ENCODE measurements at regions of chr12 and their contacts with region 1.

Region 1: DNA sequence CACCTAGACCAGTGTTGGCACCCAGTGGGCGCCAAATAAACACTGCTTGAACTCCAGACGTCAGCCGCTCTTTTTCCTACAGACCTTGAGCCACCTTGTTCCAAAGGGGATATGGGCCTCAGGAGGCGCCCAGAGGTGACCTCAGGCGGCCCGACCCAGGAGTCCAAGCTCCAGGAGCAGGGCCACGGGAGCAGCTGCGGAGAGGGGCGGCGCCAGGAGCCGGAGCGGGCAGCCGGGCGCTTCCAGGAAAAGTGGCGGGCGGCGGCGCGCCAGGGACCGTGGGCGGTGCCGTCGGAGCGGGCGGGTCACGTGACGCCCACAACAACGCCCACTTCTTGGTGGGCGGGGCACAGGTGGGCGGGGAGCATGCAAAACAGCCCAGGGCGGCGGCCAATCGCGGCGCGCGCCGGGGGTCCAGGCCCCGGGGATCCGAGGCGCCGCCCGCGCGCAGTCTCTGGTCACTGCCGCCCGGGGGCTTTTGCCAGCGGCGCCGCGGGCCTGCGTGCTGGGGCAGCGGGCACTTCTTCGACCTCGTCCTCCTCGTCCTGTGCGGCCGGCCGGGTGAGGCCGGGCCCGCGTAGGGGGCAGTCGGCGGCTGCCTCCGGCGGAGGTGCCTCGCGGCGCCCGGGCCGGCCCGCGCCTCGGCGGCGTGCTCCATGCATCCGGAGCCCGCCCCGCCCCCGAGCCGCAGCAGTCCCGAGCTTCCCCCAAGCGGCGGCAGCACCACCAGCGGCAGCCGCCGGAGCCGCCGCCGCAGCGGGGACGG is at the start of gene ORAI1:
- DNase-seq: peak; percentile 96
- ATAC-seq: peak; percentile 76
- H3K4me3 Mint-ChIP-seq: peak within 1 kb of the TSS; percentile 95
- H3K27ac Mint-ChIP-seq: peak within 1 kb of the TSS; percentile 94
- H3K4me1 Mint-ChIP-seq: peaks cover 42% of the 10 kb centered on the region
- H3K27me3 Mint-ChIP-seq: no peaks in the 10 kb centered on the region
- total RNA-seq, gene ORAI1: 67.4 to 69.6 TPM

Region 2: DNA sequence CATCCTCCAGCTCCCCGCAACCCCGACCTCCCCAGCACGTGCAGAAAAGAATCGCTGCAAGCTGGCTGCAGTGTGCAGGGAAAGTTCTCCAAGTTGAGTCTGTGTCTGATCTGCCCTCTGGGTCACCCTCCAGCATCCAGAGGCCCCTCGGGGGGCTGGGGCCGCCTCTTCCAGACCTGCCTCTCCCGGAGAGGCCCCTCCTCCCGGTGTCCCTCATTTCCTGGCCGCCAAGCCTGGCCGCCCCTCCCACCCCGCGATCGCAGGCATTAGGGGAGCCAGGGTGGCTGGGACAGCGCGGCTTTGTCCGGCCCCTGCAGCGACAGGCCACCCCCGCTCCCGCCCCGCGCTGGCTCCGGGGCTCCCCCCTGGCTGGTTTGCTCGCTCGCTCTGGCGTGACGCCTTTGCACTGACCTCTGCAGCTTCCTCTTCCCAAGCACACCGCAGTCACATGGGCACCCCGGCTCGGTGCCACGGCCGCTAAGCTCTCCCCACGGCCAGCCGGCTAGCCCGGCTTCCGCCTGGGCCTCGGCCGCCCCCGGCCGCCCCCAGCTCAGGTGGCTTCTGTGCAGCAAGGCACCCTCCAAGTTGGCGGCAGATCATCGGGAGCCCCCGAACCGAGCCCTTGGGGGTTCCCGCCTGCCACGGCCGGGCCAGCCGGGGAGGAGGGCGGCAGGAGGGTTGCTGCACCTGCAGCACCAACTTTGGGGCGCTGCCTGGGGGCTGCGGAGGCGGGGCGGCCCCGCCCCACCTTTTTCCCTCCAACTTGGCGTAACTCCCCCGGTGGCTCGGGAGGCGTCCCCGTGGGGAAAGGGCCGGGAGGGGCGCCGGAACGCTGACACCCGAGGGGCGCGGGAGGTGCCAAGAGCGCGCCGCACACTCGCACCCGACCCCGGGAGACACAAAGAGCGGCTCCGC is 89.1 kb before region 1 on chr12:
- CTCF ChIA-PET with region 1: interaction called, 6 read pairs
- POLR2A ChIA-PET with region 1: interaction called, 12 read pairs
- DNase-seq: peak; percentile 66
- ATAC-seq: peak; percentile 63
- H3K4me3 Mint-ChIP-seq: peak overlapping the region; percentile 74
- H3K27ac Mint-ChIP-seq: peak overlapping the region; percentile 85
- H3K4me1 Mint-ChIP-seq: peaks cover 55% of the 10 kb centered on the region
- H3K27me3 Mint-ChIP-seq: no peaks in the 10 kb centered on the region

Region 3: GRCh38 chr12:121579981-121580868 is 46.0 kb before region 1 on chr12:
- CTCF ChIA-PET with region 1: interaction called, 57 read pairs
- POLR2A ChIA-PET with region 1: interaction called, 32 read pairs
- DNase-seq: peak; percentile 84
- ATAC-seq: peak; percentile 76
- H3K4me3 Mint-ChIP-seq: peak overlapping the region; percentile 98
- H3K27ac Mint-ChIP-seq: peak overlapping the region; percentile 98
- H3K4me1 Mint-ChIP-seq: peaks cover 36% of the 10 kb centered on the region
- H3K27me3 Mint-ChIP-seq: no peaks in the 10 kb centered on the region

Region 4: GRCh38 chr12:121637231-121637914 is 11.1 kb after region 1 on chr12:
- CTCF ChIA-PET with region 1: interaction called, 54 read pairs
- POLR2A ChIA-PET with region 1: interaction called, 77 read pairs
- DNase-seq: peak; percentile 81
- ATAC-seq: peak; percentile 74
- H3K4me3 Mint-ChIP-seq: peak overlapping the region; percentile 52
- H3K27ac Mint-ChIP-seq: peak overlapping the region; percentile 88
- H3K4me1 Mint-ChIP-seq: peaks cover 73% of the 10 kb centered on the region
- H3K27me3 Mint-ChIP-seq: no peaks in the 10 kb centered on the region

Region 5: GRCh38 chr12:121657305-121658008 is 31.2 kb after region 1 on chr12:
- CTCF ChIA-PET with region 1: interaction called, 9 read pairs
- POLR2A ChIA-PET with region 1: interaction called, 13 read pairs
- DNase-seq: no peak
- ATAC-seq: no peak
- H3K4me3 Mint-ChIP-seq: no peak overlapping the region
- H3K27ac Mint-ChIP-seq: peak overlapping the region; percentile 95
- H3K4me1 Mint-ChIP-seq: peaks cover 74% of the 10 kb centered on the region
- H3K27me3 Mint-ChIP-seq: no peaks in the 10 kb centered on the region

Region 6: GRCh38 chr12:121668750-121669520 is 42.7 kb after region 1 on chr12:
- CTCF ChIA-PET with region 1: interaction called, 98 read pairs
- POLR2A ChIA-PET with region 1: interaction called, 39 read pairs
- DNase-seq: peak; percentile 63
- ATAC-seq: no peak
- H3K4me3 Mint-ChIP-seq: no peak overlapping the region
- H3K27ac Mint-ChIP-seq: peak overlapping the region; percentile 61
- H3K4me1 Mint-ChIP-seq: peaks cover 66% of the 10 kb centered on the region
- H3K27me3 Mint-ChIP-seq: no peaks in the 10 kb centered on the region